Activated CD4-positive, alpha-beta memory T cell treated with anti-CD3 and anti-CD28 coated beads, Interleukin-2, amount 10 ng/mL, durations not matched to agents 7 days and 5 days (primary cell): ENCODE measurements at regions of chr15 and their contacts with region 1.

Region 1: GRCh38 chr15:75591655-75592364 is 12.7 kb upstream of the PTPN9 start:
- DNase-seq: no peak
- H3K4me3 Mint-ChIP-seq: no peak overlapping the region
- H3K27ac Mint-ChIP-seq: no peak overlapping the region
- H3K4me1 Mint-ChIP-seq: peaks cover 37% of the 10 kb centered on the region
- H3K27me3 Mint-ChIP-seq: no peaks in the 10 kb centered on the region

Region 2: GRCh38 chr15:75554717-75555116 is 37.1 kb before region 1 on chr15:
- CTCF ChIA-PET with region 1: no interaction called
- POLR2A ChIA-PET with region 1: no interaction called
- DNase-seq: no peak
- H3K4me3 Mint-ChIP-seq: no peak overlapping the region
- H3K27ac Mint-ChIP-seq: no peak overlapping the region
- H3K4me1 Mint-ChIP-seq: peaks cover 1% of the 10 kb centered on the region
- H3K27me3 Mint-ChIP-seq: no peaks in the 10 kb centered on the region

Region 3: GRCh38 chr15:75606711-75607699 is 15.2 kb after region 1 on chr15:
- CTCF ChIA-PET with region 1: interaction called, 27 read pairs
- POLR2A ChIA-PET with region 1: interaction called, 66 read pairs
- DNase-seq: peak; percentile 70
- H3K4me3 Mint-ChIP-seq: peak overlapping the region; percentile 60
- H3K27ac Mint-ChIP-seq: peak overlapping the region; percentile 98
- H3K4me1 Mint-ChIP-seq: peaks cover 52% of the 10 kb centered on the region
- H3K27me3 Mint-ChIP-seq: no peaks in the 10 kb centered on the region

Region 4: GRCh38 chr15:75705853-75706681 is 114.3 kb after region 1 on chr15:
- CTCF ChIA-PET with region 1: no interaction called
- POLR2A ChIA-PET with region 1: no interaction called
- DNase-seq: no peak
- H3K4me3 Mint-ChIP-seq: no peak overlapping the region
- H3K27ac Mint-ChIP-seq: no peak overlapping the region
- H3K4me1 Mint-ChIP-seq: no peaks in the 10 kb centered on the region
- H3K27me3 Mint-ChIP-seq: no peaks in the 10 kb centered on the region